ENCODE measurements at regions of chr9 and their contacts with region 1.

Region 1: GRCh38 chr9:74570879-74571512 is 73.9 kb downstream of the RORB start:
- DNase-seq: peak; percentile 16
- ATAC-seq: no peak
- H3K4me3 ChIP-seq: no peak overlapping the region
- H3K27ac ChIP-seq: no peak overlapping the region
- H3K4me1 ChIP-seq: no peaks in the 10 kb centered on the region
- H3K27me3 ChIP-seq: peaks cover 37% of the 10 kb centered on the region
- CTCF ChIP-seq: peak; percentile 31 to 72 (median 67); a peak in 4 of 6 replicates
- POLR2A ChIP-seq: no peak
- RAD21 ChIP-seq: peak; percentile 62

Region 2: DNA sequence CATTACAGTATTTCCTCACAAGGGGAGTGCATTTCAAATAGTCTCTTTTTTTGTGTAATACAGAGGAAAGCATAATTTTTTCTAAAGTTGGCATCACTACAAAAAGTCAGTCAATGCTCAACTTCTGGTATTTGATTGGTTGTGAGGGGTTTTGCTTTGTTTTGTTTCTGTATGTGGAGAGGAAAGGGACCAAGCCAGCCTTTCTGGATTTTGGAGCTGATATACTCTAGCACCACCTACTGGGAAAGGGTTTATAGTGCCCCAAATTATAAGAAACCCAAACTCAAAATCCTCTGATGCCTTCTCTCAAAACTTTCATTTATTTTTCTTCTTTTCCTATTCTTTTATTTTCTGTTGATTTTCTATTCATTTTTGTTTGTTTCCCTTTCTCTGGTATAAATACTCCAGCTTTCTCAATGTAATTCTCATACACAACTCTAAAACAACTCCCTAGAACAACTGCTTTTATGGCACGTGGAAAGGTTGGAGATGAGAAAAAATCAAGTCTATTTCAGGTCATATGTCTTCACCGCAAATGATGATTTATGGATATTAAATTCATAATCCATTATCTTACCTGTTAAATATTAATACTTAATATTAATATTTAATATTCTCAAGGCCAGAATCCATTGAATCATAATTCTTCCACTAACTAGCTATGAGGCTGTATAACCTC is 1488.9 kb before region 1 on chr9:
- CTCF ChIA-PET with region 1: no interaction called
- POLR2A ChIA-PET with region 1: no interaction called
- RAD21 ChIA-PET with region 1: no interaction called
- intact Hi-C with region 1: loop called (anchors 10 kb)
- DNase-seq: peak; percentile 41
- ATAC-seq: peak; percentile 68
- H3K4me3 ChIP-seq: no peak overlapping the region
- H3K27ac ChIP-seq: no peak overlapping the region
- H3K4me1 ChIP-seq: peaks cover 5 to 12% of the 10 kb centered on the region in 2 experiments; a peak in 3 of 4 replicates
- H3K27me3 ChIP-seq: no peaks in the 10 kb centered on the region
- CTCF ChIP-seq: peak; percentile 57 to 78 (median 78); a peak in 5 of 6 replicates
- POLR2A ChIP-seq: no peak
- RAD21 ChIP-seq: peak; percentile 73

Region 3: DNA sequence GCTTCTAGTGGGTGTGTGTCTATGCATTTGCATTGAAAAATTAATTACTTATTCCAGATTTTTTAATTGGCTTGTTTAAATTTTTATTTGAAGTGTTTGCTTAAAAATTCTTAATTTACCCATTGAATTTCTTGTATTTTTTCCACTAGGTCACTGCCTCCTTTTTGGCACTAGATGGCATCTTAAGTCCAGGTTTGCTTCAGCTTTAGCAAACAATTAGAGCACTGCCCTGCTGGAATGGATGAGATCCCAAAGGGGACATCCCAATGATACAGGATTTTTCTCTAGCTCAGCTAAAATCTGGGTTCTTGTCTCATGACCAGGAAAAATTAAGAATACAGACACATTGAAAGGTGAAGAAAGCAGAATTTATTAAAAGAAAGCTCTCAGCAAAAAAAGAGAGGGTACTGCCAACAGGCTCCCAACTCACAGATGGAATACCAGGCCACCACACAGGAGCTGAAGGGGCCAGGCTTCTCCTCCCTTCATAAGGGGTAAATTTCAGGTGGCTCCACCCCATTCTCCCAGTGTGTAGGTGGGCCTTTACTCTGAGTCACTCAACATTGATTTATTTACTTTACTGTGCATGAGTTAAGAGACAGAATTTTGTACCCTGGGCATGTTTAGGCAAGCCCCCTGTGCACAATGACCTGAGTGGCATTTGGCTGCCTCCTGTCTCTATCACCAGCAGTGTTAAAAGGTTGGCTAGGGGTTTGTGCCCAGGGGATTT is 887.0 kb before region 1 on chr9:
- CTCF ChIA-PET with region 1: no interaction called
- POLR2A ChIA-PET with region 1: no interaction called
- RAD21 ChIA-PET with region 1: no interaction called
- intact Hi-C with region 1: loop called (anchors 2 kb)
- DNase-seq: peak; percentile 19
- ATAC-seq: peak; percentile 63; the same call in 1 of the 2 replicates
- H3K4me3 ChIP-seq: no peak overlapping the region
- H3K27ac ChIP-seq: no peak overlapping the region
- H3K4me1 ChIP-seq: no peaks in the 10 kb centered on the region
- H3K27me3 ChIP-seq: no peaks in the 10 kb centered on the region
- CTCF ChIP-seq: peak; percentile 24 to 58 (median 42); a peak in 4 of 6 replicates
- POLR2A ChIP-seq: no peak
- RAD21 ChIP-seq: peak; percentile 68

Region 4: GRCh38 chr9:74092491-74092834 is 478.5 kb before region 1 on chr9:
- CTCF ChIA-PET with region 1: no interaction called
- POLR2A ChIA-PET with region 1: no interaction called
- RAD21 ChIA-PET with region 1: no interaction called
- intact Hi-C with region 1: loop called (anchors 5 kb)
- DNase-seq: no peak
- ATAC-seq: no peak
- H3K4me3 ChIP-seq: no peak overlapping the region
- H3K27ac ChIP-seq: no peak overlapping the region
- H3K4me1 ChIP-seq: no peaks in the 10 kb centered on the region
- H3K27me3 ChIP-seq: no peaks in the 10 kb centered on the region
- CTCF ChIP-seq: no peak
- POLR2A ChIP-seq: no peak
- RAD21 ChIP-seq: no peak

Region 5: DNA sequence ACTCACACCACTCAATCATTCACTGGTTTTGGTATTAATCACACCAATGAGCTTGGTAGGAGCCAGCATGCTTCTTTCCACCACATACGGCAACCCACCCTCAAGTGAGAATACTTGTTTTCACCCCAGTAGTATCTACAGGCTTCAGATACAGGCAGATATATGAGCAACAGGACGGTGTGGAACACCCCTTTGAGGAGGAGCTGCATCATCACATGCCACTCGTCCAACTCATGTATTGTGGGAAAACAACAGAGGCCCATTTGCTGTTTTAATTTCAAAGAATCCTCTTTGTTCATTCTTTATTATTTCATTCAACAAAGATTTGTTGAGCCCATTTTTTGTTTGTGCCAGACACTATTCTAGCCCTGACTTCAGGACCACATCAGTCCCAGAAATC is 27.9 kb before region 1 on chr9:
- CTCF ChIA-PET with region 1: no interaction called
- POLR2A ChIA-PET with region 1: no interaction called
- RAD21 ChIA-PET with region 1: no interaction called
- intact Hi-C with region 1: no loop called
- DNase-seq: no peak
- ATAC-seq: no peak
- H3K4me3 ChIP-seq: no peak overlapping the region
- H3K27ac ChIP-seq: no peak overlapping the region
- H3K4me1 ChIP-seq: no peaks in the 10 kb centered on the region
- H3K27me3 ChIP-seq: peaks cover 11% of the 10 kb centered on the region; the same call in 1 of the 2 replicates
- CTCF ChIP-seq: no peak
- POLR2A ChIP-seq: no peak
- RAD21 ChIP-seq: no peak

Measured in HCT116 (cell line).